ENCODE measurements at regions of chr4 and their contacts with region 1.

Region 1: GRCh38 chr4:158856852-158857251 is 88.0 kb downstream of the FNIP2 start:
- DNase-seq: peak; percentile 57
- CTCF ChIP-seq: peak; percentile 59

Region 2: DNA sequence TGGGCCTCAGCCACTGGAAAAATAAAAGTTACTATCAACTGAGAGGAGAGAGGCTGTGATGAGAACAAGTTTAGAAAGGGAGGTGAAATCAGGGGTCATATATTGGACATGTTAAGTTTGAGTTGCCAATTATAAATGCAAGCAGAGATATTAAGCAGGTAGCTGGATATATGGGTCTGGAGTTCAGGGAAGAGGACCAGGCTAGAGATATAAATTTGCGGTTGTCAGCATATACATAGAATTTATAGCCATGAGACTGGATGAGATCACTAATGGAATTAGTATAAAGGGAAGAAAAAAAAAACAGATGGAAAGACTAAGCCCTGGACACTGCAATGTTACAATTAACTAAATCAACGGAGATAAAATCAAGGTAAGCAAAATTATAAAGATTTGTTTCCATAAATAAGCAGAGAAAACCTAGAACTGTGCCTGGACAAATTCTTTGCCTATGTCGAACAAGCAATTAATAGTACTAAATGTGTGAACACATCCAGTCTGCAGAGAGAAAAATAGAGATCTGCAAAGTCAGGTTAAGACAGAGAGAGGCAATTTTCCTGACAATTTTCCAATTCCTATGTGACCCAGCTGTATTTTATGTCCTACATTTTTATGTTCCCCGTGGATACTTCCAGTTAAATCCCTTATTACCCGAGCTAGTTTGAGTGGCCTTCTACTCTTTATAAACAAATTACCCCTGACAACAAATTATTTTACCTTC is 949.5 kb before region 1 on chr4:
- CTCF ChIA-PET with region 1: no interaction called
- POLR2A ChIA-PET with region 1: no interaction called
- DNase-seq: no peak
- CTCF ChIP-seq: no peak

Region 3: GRCh38 chr4:158845311-158846041 is 11.4 kb before region 1 on chr4:
- CTCF ChIA-PET with region 1: interaction called, 42 read pairs
- POLR2A ChIA-PET with region 1: no interaction called
- DNase-seq: no peak
- CTCF ChIP-seq: no peak

Region 4: DNA sequence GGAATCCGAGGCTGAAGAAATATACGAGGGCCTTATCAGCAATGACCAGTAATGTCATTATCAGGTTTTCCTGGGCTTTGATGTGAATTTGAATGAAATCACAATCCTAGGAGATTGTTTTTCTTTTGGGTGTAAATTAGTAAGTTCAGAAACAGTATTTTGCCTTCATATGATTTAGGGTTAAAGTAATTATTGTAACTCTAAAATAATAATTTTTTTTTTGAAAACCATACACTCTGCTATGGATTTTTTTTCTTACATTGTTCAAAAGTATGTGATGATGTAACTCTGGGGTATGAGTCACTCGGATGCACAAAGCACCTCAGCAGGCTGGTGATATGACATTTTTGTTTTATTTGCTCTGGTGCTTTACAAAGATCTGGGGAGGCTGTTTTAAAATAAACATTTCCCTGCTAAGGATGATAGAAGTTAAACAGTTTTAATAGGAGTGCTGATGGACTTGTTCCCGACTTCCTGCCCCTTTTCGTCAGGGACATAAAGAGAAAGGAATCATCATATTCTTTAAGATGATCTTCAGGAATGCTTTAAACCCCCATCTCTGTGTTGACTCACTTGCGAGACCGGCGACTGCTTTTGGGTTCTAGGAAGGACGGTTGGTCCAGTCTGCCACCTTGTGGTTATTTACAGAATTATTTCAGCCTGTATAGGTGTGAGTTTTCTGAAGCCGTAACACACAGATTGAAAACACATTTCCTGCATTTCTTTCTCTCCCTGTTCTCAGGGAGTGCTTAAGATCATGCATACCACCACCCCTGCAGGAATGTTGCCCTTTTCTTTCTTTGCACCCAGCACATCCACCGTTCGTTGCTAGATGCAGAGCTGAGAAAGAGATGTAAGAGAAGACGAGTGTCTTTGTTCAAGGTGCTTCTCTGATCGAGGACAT is 318.5 kb after region 1 on chr4:
- CTCF ChIA-PET with region 1: interaction called, 13 read pairs
- POLR2A ChIA-PET with region 1: no interaction called
- DNase-seq: peak; percentile 29
- CTCF ChIP-seq: peak; percentile 71

Region 5: DNA sequence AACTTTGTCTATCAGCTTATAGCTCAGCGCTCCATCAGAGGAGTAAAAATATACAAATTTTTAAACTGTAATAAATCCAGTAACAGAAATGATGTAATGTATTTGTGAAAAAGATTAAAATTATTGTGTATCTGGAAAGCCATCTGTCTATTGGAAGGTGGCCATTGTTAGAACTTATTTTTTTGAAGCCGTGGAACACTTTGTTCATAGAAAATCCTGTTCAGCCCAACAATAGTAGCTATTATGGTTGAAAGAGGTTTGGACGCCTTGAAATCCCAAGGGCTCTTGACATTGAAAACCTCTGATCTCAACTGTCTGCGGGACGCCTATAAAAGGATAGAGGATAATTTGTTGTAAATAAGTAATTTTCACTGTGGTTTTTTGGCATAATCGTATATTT is 344.3 kb after region 1 on chr4:
- CTCF ChIA-PET with region 1: interaction called, 55 read pairs
- POLR2A ChIA-PET with region 1: no interaction called
- DNase-seq: no peak
- CTCF ChIP-seq: no peak

Region 6: GRCh38 chr4:159206427-159206871 is 349.6 kb after region 1 on chr4:
- CTCF ChIA-PET with region 1: interaction called, 55 read pairs
- POLR2A ChIA-PET with region 1: no interaction called
- DNase-seq: peak; percentile 46
- CTCF ChIP-seq: no peak